T-cell (primary cell): ENCODE measurements at regions of chr3 and their contacts with region 1.

Region 1: GRCh38 chr3:118884748-118885206 is 149.9 kb downstream of the IGSF11 start:
- DNase-seq: peak; percentile 41 to 81 (median 71)
- ATAC-seq: peak; percentile 80 to 88 (median 86)
- H3K4me3 ChIP-seq: no peak overlapping the region
- H3K4me3 Mint-ChIP-seq: no peak overlapping the region
- H3K27ac ChIP-seq: no peak overlapping the region
- H3K27ac Mint-ChIP-seq: no peak overlapping the region
- H3K4me1 ChIP-seq: peaks cover 0 to 4% of the 10 kb centered on the region in 2 experiments
- H3K4me1 Mint-ChIP-seq: peaks cover 5 to 12% (median 5%) of the 10 kb centered on the region in 3 donors
- H3K27me3 ChIP-seq: peaks cover 2 to 12% of the 10 kb centered on the region in 2 experiments
- H3K27me3 Mint-ChIP-seq: peaks cover 10 to 19% of the 10 kb centered on the region in 2 donors

Region 2: GRCh38 chr3:119042164-119042563 is 157.4 kb after region 1 on chr3:
- CTCF ChIA-PET with region 1: interaction called, 186 to 215 read pairs
- POLR2A ChIA-PET with region 1: no interaction called
- DNase-seq: no peak
- ATAC-seq: no peak
- H3K4me3 ChIP-seq: no peak overlapping the region
- H3K4me3 Mint-ChIP-seq: no peak overlapping the region
- H3K27ac ChIP-seq: no peak overlapping the region
- H3K27ac Mint-ChIP-seq: no peak overlapping the region
- H3K4me1 ChIP-seq: no peaks in the 10 kb centered on the region
- H3K4me1 Mint-ChIP-seq: no peaks in the 10 kb centered on the region
- H3K27me3 ChIP-seq: peaks cover 3 to 6% of the 10 kb centered on the region in 2 experiments
- H3K27me3 Mint-ChIP-seq: peaks cover 39 to 42% of the 10 kb centered on the region in 2 donors

Region 3: GRCh38 chr3:119104031-119104430 is 219.3 kb after region 1 on chr3:
- CTCF ChIA-PET with region 1: interaction called, 234 to 237 read pairs
- POLR2A ChIA-PET with region 1: no interaction called
- DNase-seq: no peak
- ATAC-seq: no peak
- H3K4me3 ChIP-seq: no peak overlapping the region
- H3K4me3 Mint-ChIP-seq: no peak overlapping the region
- H3K27ac ChIP-seq: no peak overlapping the region
- H3K27ac Mint-ChIP-seq: no peak overlapping the region
- H3K4me1 ChIP-seq: no peaks in the 10 kb centered on the region
- H3K4me1 Mint-ChIP-seq: no peaks in the 10 kb centered on the region
- H3K27me3 ChIP-seq: no peaks in the 10 kb centered on the region
- H3K27me3 Mint-ChIP-seq: no peaks in the 10 kb centered on the region

Region 4: DNA sequence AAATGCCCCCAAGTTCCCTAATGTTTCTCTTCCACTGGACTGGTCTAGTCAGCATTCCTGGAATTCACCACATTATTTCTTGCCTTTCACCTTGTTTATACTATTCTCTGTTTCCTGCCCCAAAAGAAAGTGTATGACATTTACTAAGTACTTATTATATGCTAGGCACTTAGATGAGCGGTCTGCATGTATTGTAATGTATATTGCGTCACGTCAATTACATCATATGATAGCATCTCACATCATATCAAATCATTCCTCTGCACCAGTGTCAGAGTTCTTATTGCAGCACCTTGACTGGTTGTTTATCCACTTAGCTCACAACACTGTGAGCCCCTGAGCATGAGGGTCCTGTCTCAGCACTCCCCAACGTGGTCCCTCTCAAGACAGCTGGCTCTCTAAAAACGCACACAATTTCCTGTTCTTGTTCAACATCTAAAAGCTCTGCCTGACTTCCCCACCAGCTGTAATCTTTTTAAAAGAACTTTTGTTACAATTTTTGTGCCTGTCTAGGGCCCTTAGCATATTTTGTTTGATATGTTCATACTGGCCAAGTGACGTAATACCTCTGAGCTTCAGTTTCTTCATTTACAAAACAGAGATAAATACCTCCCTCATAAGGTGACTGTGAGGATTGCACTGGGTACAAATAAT is 468.2 kb after region 1 on chr3:
- CTCF ChIA-PET with region 1: interaction called, 19 to 39 read pairs
- POLR2A ChIA-PET with region 1: no interaction called
- DNase-seq: peak in 9 of 35 experiments; percentile 3 to 72 (median 14)
- ATAC-seq: peak; percentile 46 to 88 (median 62)
- H3K4me3 ChIP-seq: no peak overlapping the region
- H3K4me3 Mint-ChIP-seq: peak overlapping the region in 1 of 3 donors; percentile 43
- H3K27ac ChIP-seq: no peak overlapping the region
- H3K27ac Mint-ChIP-seq: peak overlapping the region; percentile 42 to 48
- H3K4me1 ChIP-seq: peaks cover 24 to 38% of the 10 kb centered on the region in 2 experiments
- H3K4me1 Mint-ChIP-seq: peaks cover 31 to 44% (median 37%) of the 10 kb centered on the region in 3 donors
- H3K27me3 ChIP-seq: no peaks in the 10 kb centered on the region
- H3K27me3 Mint-ChIP-seq: no peaks in the 10 kb centered on the region